ENCODE measurements at regions of chr5 and their contacts with region 1.

Region 1: GRCh38 chr5:118987988-118988865 is at the start of gene DTWD2:
- DNase-seq: peak; percentile 97
- H3K4me3 ChIP-seq: peak within 1 kb of the TSS; percentile 71 to 98 (median 79)
- H3K27ac ChIP-seq: peak within 1 kb of the TSS; percentile 87 to 97 (median 94)
- H3K4me1 ChIP-seq: peaks cover 0 to 19% (median 19%) of the 10 kb centered on the region in 4 donors
- H3K27me3 ChIP-seq: no peaks in the 10 kb centered on the region
- CTCF ChIP-seq: peak; percentile 72 to 90 (median 75)
- EP300 ChIP-seq: no peak
- POLR2A ChIP-seq: no peak
- total RNA-seq, gene DTWD2: 7.1 to 10.5 (median 9.1) TPM

Region 2: GRCh38 chr5:119070828-119071572 is 82.8 kb after region 1 on chr5 and contains the start of gene DMXL1:
- intact Hi-C with region 1: loop called (anchors 2 kb)
- DNase-seq: peak; percentile 100
- H3K4me3 ChIP-seq: peak within 1 kb of the TSS; percentile 84 to 97 (median 95)
- H3K27ac ChIP-seq: peak within 1 kb of the TSS; percentile 96 to 99 (median 98)
- H3K4me1 ChIP-seq: peaks cover 21 to 46% (median 35%) of the 10 kb centered on the region in 4 donors
- H3K27me3 ChIP-seq: no peaks in the 10 kb centered on the region
- CTCF ChIP-seq: no peak
- EP300 ChIP-seq: no peak
- POLR2A ChIP-seq: peak; percentile 78
- total RNA-seq, gene DMXL1: 36.3 to 65.6 (median 39.9) TPM

Region 3: DNA sequence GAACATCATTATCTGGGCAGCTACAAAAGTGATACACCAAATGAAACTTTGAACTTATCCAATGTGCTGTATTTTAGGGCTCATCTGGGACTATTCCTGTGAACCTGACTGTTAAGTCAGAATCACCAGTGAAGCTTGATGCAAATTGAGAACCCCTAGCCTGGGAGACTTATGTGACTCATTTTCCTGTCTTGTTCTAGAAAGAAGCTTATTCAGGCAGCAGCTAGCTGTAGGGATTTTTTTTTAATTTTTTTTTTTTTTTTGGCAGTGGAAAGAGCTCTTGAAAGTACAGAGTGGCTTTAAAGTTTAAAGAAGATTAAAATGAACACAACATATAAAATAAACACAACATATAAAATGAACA is 286.5 kb after region 1 on chr5:
- intact Hi-C with region 1: loop called (anchors 10 kb)
- DNase-seq: no peak
- H3K4me3 ChIP-seq: no peak overlapping the region
- H3K27ac ChIP-seq: no peak overlapping the region
- H3K4me1 ChIP-seq: peaks cover 19 to 41% (median 36%) of the 10 kb centered on the region in 4 donors
- H3K27me3 ChIP-seq: no peaks in the 10 kb centered on the region
- CTCF ChIP-seq: no peak
- EP300 ChIP-seq: no peak
- POLR2A ChIP-seq: no peak

Region 4: DNA sequence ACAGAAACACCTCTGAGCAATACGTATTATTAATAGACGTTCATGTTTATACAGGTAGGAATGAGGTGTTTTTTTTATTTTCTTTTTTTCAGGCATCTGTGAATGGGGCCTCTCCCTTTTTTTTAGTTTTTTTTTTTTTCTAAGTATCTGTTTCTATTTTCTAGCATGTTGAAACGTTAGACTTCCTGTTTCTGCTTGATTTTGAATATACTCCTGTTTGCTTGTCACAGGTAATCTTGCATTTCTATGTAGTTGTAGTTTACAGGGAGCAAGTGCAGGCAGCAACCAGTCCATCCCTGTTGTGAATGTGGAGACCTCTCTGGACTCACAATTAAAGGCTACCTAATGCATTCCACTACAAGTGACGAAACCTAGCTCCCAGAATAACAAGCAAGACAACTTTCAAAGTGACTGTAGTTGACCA is 344.8 kb after region 1 on chr5:
- intact Hi-C with region 1: loop called (anchors 10 kb)
- DNase-seq: no peak
- H3K4me3 ChIP-seq: no peak overlapping the region
- H3K27ac ChIP-seq: no peak overlapping the region
- H3K4me1 ChIP-seq: peaks cover 23 to 48% (median 41%) of the 10 kb centered on the region in 4 donors
- H3K27me3 ChIP-seq: no peaks in the 10 kb centered on the region
- CTCF ChIP-seq: no peak
- EP300 ChIP-seq: no peak
- POLR2A ChIP-seq: no peak

Measured in esophagus muscularis mucosa (tissue), 4 donors.